ENCODE measurements at regions of chr7 and their contacts with region 1.

Region 1: GRCh38 chr7:106659963-106660861 is 746 bp downstream of the CCDC71L start:
- DNase-seq: peak; percentile 91
- H3K4me3 Mint-ChIP-seq: peak overlapping the region; percentile 87
- H3K27ac Mint-ChIP-seq: peak overlapping the region; percentile 83
- H3K4me1 Mint-ChIP-seq: peaks cover 28% of the 10 kb centered on the region
- H3K27me3 Mint-ChIP-seq: no peaks in the 10 kb centered on the region

Region 2: GRCh38 chr7:106176414-106177299 is 483.6 kb before region 1 on chr7:
- CTCF ChIA-PET with region 1: interaction called, 40 read pairs
- POLR2A ChIA-PET with region 1: no interaction called
- intact Hi-C with region 1: loop called (anchors 2 kb)
- DNase-seq: peak; percentile 80
- H3K4me3 Mint-ChIP-seq: no peak overlapping the region
- H3K27ac Mint-ChIP-seq: no peak overlapping the region
- H3K4me1 Mint-ChIP-seq: peaks cover 5% of the 10 kb centered on the region
- H3K27me3 Mint-ChIP-seq: peaks cover 13% of the 10 kb centered on the region

Region 3: GRCh38 chr7:106542550-106543220 is 117.5 kb before region 1 on chr7:
- CTCF ChIA-PET with region 1: interaction called, 45 read pairs
- POLR2A ChIA-PET with region 1: no interaction called
- intact Hi-C with region 1: loop called (anchors 1 kb)
- DNase-seq: peak; percentile 64
- H3K4me3 Mint-ChIP-seq: no peak overlapping the region
- H3K27ac Mint-ChIP-seq: peak overlapping the region; percentile 11
- H3K4me1 Mint-ChIP-seq: peaks cover 22% of the 10 kb centered on the region
- H3K27me3 Mint-ChIP-seq: no peaks in the 10 kb centered on the region

Region 4: DNA sequence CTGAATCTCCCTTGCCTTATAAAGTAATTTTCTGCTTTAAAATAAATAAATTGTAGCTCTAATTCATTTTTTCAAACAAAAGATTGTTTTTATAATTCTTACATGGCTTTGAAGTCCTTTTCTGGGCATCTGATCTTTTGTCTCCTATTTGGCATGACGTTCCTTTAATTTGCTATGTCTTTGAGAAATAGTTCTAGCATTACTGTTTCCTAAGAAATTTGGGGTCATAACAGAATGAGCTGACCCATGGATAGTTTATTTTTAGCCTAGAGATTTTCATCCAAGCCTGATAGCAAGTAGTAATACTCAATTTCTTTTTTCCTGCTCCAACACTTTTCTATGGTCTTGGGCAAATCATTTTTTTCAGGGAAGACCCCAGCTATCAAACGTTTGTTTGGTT is 30.7 kb before region 1 on chr7:
- CTCF ChIA-PET with region 1: no interaction called
- POLR2A ChIA-PET with region 1: no interaction called
- intact Hi-C with region 1: no loop called
- DNase-seq: no peak
- H3K4me3 Mint-ChIP-seq: no peak overlapping the region
- H3K27ac Mint-ChIP-seq: no peak overlapping the region
- H3K4me1 Mint-ChIP-seq: no peaks in the 10 kb centered on the region
- H3K27me3 Mint-ChIP-seq: peaks cover 5% of the 10 kb centered on the region

Region 5: DNA sequence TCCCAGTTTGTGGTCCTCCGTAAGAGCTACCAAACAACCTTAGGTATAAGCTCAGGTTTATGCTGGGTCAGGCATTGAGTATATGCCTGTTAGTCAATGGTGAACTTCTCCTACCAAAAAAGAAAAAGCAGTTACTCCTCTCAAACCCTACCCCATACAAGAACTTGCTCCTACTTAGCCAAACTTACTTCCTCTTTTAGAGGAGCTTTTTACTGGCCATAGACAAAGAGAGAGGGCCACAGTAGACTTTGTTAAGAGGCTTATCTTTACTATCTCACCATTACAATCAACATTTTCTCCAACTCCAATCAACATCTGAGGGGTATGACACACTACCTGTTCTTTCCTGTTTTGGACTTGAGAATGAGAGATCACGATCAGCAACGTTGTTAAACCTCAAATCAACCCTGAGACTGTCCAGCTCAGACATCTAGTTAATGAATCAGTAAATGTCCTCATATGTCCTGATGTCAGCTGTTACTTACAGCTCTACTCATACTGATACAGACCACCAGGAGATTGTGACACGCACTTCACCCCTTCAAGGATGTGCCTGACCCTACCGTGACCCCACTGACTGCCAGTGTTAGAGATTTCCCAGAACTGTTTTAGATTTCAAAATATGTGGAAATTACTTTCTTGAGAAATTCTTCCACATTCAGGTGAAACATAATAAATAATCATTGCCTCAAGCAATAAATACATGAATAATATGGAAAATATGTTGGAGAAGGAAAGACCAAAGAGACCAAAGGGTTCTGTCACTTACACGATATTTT is 19.1 kb after region 1 on chr7:
- CTCF ChIA-PET with region 1: interaction called, 24 read pairs
- POLR2A ChIA-PET with region 1: interaction called, 4 read pairs
- intact Hi-C with region 1: no loop called
- DNase-seq: peak; percentile 52
- H3K4me3 Mint-ChIP-seq: no peak overlapping the region
- H3K27ac Mint-ChIP-seq: peak overlapping the region; percentile 72
- H3K4me1 Mint-ChIP-seq: peaks cover 13% of the 10 kb centered on the region
- H3K27me3 Mint-ChIP-seq: no peaks in the 10 kb centered on the region

Region 6: GRCh38 chr7:106736508-106737201 is 76.4 kb after region 1 on chr7:
- CTCF ChIA-PET with region 1: interaction called, 268 read pairs
- POLR2A ChIA-PET with region 1: interaction called, 21 read pairs
- intact Hi-C with region 1: loop called (anchors 1 kb)
- DNase-seq: peak; percentile 55
- H3K4me3 Mint-ChIP-seq: no peak overlapping the region
- H3K27ac Mint-ChIP-seq: peak overlapping the region; percentile 73
- H3K4me1 Mint-ChIP-seq: peaks cover 47% of the 10 kb centered on the region
- H3K27me3 Mint-ChIP-seq: no peaks in the 10 kb centered on the region

Region 7: GRCh38 chr7:106767498-106768323 is 107.5 kb after region 1 on chr7:
- CTCF ChIA-PET with region 1: interaction called, 14 read pairs
- POLR2A ChIA-PET with region 1: no interaction called
- intact Hi-C with region 1: loop called (anchors 2 kb)
- DNase-seq: peak; percentile 18
- H3K4me3 Mint-ChIP-seq: peak overlapping the region; percentile 42
- H3K27ac Mint-ChIP-seq: peak overlapping the region; percentile 65
- H3K4me1 Mint-ChIP-seq: peaks cover 49% of the 10 kb centered on the region
- H3K27me3 Mint-ChIP-seq: no peaks in the 10 kb centered on the region

Measured in activated CD4-positive, alpha-beta memory T cell treated with anti-CD3 and anti-CD28 coated beads for 36 hours (primary cell).